Tibial artery (tissue), 4 donors: ENCODE measurements at regions of chr1 and their contacts with region 1.

Region 1: DNA sequence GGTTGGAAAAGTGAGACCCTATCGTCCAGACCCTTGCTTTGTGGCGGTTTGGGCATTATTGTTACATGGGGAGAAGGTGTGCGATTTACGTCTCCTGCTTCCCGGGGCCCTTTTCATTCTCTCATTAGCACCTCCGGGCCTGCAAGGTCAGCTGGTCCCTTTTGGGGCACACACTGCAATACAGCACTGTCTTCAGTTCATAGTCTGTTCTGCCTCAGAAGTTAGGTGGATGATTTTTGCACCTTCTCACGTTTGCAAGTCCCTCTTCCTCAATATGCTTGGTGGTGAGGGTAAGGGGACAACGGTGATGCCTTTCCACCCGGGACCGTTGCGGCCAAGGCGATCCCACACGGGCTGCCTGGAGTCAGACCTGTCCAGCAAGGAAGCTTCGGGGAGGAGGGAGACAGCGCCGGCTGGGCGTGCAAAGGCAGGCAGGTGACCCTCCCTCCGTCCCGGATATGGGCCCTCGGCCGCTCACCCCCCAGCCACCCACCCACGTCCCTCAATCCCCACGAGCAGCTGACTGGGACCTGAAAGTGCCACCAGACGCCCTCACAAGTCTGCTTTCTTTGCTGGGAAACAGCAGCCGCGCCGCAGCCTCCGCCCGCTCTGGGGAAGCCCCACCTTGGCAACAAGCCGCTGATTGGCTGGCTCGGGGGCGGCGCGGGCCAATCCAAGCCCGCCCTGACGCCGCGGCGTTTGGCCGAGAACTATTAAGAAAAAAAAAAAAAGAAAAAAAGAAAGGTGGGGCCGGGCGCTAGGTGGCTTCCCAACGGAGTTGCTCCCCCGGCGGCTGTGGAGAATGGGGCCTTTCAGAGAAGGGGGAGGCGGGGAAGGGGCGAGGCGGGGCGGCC is 21.7 kb downstream of the BTG2 start:
- DNase-seq: peak; percentile 92 to 97
- H3K4me3 ChIP-seq: peak overlapping the region; percentile 61 to 72
- H3K27ac ChIP-seq: peak overlapping the region; percentile 91 to 94
- H3K4me1 ChIP-seq: peaks cover 0 to 53% (median 18%) of the 10 kb centered on the region in 4 donors
- H3K27me3 ChIP-seq: no peaks in the 10 kb centered on the region
- CTCF ChIP-seq: no peak

Region 2: GRCh38 chr1:203038891-203039608 is 288.0 kb before region 1 on chr1:
- intact Hi-C with region 1: loop called (anchors 5 kb)
- DNase-seq: peak; percentile 76 to 79
- H3K4me3 ChIP-seq: no peak overlapping the region
- H3K27ac ChIP-seq: peak overlapping the region; percentile 56 to 76
- H3K4me1 ChIP-seq: peaks cover 0 to 26% (median 17%) of the 10 kb centered on the region in 4 donors
- H3K27me3 ChIP-seq: no peaks in the 10 kb centered on the region
- CTCF ChIP-seq: peak; percentile 91 to 96

Region 3: GRCh38 chr1:203267347-203267846 is 59.7 kb before region 1 on chr1:
- intact Hi-C with region 1: loop called (anchors 2 kb)
- DNase-seq: peak; percentile 89 to 92
- H3K4me3 ChIP-seq: peak overlapping the region; percentile 51 to 65
- H3K27ac ChIP-seq: peak overlapping the region; percentile 72 to 76
- H3K4me1 ChIP-seq: peaks cover 0 to 9% (median under 1%) of the 10 kb centered on the region in 4 donors
- H3K27me3 ChIP-seq: no peaks in the 10 kb centered on the region
- CTCF ChIP-seq: peak; percentile 92 to 93

Region 4: GRCh38 chr1:203306089-203306966 is 20.7 kb before region 1 on chr1:
- intact Hi-C with region 1: loop called (anchors 2 kb)
- DNase-seq: peak; percentile 96 to 98
- H3K4me3 ChIP-seq: peak overlapping the region; percentile 94 to 100
- H3K27ac ChIP-seq: peak overlapping the region; percentile 100
- H3K4me1 ChIP-seq: peaks cover 0 to 44% (median 34%) of the 10 kb centered on the region in 4 donors
- H3K27me3 ChIP-seq: no peaks in the 10 kb centered on the region
- CTCF ChIP-seq: no peak